ENCODE measurements at regions of chr20 and their contacts with region 1.

Region 1: DNA sequence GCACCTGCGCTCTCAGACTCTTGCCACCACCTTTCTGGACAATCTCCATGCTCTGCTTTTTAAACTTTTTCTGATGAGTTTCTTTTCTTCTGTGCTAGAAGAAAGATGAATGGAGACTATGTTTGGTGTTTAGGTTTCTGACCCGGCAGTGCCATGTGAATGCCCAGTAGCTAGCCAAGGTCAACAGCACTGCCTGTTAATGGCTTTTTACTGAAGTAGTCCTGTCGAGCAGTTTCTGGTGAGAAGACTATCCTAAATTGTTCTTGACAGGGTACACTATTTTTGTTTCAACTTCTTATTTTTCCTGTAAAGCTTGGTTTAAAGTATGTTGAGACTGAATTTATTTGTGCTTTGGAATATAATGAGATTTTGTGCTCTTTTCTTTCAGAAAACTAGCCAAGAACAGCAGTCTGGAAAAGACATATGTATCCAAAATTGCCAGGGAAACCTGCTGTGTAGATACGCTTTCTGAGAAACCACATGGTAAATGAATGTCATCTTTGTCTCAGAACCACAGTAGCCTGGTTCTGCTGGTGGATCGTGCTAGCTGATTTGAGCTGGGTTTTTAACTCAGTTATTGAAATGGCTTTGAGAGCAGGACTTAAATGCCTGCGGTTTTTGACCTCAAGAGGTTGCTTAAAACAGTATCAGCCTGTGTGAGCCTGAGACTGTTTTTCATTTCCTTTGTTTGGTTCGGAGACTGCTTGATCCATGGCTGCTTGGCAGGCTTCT is 48.1 kb downstream of the KCNS1 start:
- DNase-seq: no peak
- ATAC-seq: no peak
- H3K4me3 ChIP-seq: no peak overlapping the region
- H3K27ac ChIP-seq: no peak overlapping the region
- H3K4me1 ChIP-seq: peaks cover 12% of the 10 kb centered on the region
- H3K27me3 ChIP-seq: no peaks in the 10 kb centered on the region
- CTCF ChIP-seq: no peak

Region 2: DNA sequence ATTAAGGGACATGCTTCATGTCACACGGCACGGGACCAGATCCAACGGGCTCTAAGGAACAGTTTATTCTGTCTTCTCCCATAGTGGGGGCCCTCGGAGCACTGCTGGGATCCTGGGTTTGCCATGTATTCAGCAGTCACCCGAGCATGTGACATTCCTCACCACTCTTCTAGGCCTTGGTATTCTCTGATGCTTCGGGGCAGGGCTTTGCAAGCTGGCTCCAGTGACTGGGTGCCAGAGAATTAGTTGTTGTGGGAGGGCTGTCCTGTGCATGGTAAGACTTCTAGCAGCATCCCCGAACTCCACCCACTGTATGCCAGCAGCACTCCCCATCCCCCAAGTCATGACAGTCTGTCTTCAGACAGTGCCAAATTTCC is 332.3 kb before region 1 on chr20:
- CTCF ChIA-PET with region 1: no interaction called
- POLR2A ChIA-PET with region 1: no interaction called
- intact Hi-C with region 1: no loop called
- DNase-seq: peak; percentile 77
- ATAC-seq: peak; percentile 73
- H3K4me3 ChIP-seq: no peak overlapping the region
- H3K27ac ChIP-seq: peak overlapping the region; percentile 48
- H3K4me1 ChIP-seq: peaks cover 19% of the 10 kb centered on the region
- H3K27me3 ChIP-seq: no peaks in the 10 kb centered on the region
- CTCF ChIP-seq: no peak

Region 3: GRCh38 chr20:45036044-45036755 is 16.7 kb before region 1 on chr20:
- CTCF ChIA-PET with region 1: no interaction called
- POLR2A ChIA-PET with region 1: no interaction called
- intact Hi-C with region 1: no loop called
- DNase-seq: peak; percentile 76
- ATAC-seq: peak; percentile 83
- H3K4me3 ChIP-seq: no peak overlapping the region
- H3K27ac ChIP-seq: peak overlapping the region; percentile 45
- H3K4me1 ChIP-seq: peaks cover 29% of the 10 kb centered on the region
- H3K27me3 ChIP-seq: no peaks in the 10 kb centered on the region
- CTCF ChIP-seq: no peak

Region 4: DNA sequence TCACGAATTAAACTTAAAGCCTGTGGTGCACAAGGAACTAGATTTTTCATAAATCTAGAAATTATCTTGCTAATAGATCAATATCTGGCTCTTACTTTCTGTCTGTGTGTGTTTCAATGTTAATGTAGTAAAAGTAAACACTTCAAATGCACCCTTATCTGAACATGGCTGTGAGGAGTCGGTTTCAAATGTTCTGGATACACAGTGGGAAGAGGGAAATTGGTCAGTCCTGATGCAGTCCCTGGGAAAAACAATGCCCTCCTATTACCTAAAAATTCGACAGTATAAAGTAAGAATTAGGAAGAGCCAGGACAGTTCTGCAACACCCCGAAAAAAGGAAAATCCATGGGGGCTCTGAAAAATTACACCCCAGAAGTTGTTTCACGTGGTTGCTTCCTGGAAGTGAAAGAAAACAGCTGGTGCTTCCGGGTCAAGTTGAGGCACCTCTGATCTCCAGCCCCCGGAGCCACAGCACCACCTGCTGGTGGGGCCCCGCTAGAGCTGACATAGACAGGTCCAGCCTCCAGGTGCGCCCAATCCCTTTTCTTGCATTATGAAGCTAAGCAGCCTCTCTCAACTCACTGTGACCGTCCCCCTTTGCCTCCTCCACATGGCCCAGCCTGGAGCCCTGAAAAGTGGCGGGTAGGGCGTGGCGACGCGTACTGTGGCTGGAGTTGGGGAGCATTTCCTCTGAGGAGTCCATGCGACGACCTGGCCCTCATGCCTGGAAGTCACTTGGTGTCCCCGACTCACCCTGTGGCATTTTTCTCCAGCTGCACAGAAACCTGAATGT is 176.6 kb after region 1 on chr20:
- CTCF ChIA-PET with region 1: no interaction called
- POLR2A ChIA-PET with region 1: interaction called, 53 read pairs
- intact Hi-C with region 1: no loop called
- DNase-seq: peak; percentile 91
- ATAC-seq: peak; percentile 83
- H3K4me3 ChIP-seq: peak overlapping the region; percentile 28; the same call in 1 of the 2 replicates
- H3K27ac ChIP-seq: no peak overlapping the region
- H3K4me1 ChIP-seq: 0 out of 2 replicates have a peak, but pooled peaks cover 5% of the 10 kb centered on the region
- H3K27me3 ChIP-seq: no peaks in the 10 kb centered on the region
- CTCF ChIP-seq: peak; percentile 97

Region 5: GRCh38 chr20:45456632-45457031 is 403.8 kb after region 1 on chr20:
- CTCF ChIA-PET with region 1: no interaction called
- POLR2A ChIA-PET with region 1: no interaction called
- intact Hi-C with region 1: no loop called
- DNase-seq: peak; percentile 63
- ATAC-seq: peak; percentile 54; the same call in 1 of the 2 replicates
- H3K4me3 ChIP-seq: no peak overlapping the region
- H3K27ac ChIP-seq: no peak overlapping the region
- H3K4me1 ChIP-seq: no peaks in the 10 kb centered on the region
- H3K27me3 ChIP-seq: no peaks in the 10 kb centered on the region
- CTCF ChIP-seq: peak; percentile 74

Region 6: GRCh38 chr20:45538209-45538799 is 485.4 kb after region 1 on chr20:
- CTCF ChIA-PET with region 1: interaction called, 13 read pairs
- POLR2A ChIA-PET with region 1: no interaction called
- intact Hi-C with region 1: no loop called
- DNase-seq: peak; percentile 93
- ATAC-seq: peak; percentile 63
- H3K4me3 ChIP-seq: no peak overlapping the region
- H3K27ac ChIP-seq: no peak overlapping the region
- H3K4me1 ChIP-seq: peaks cover 10% of the 10 kb centered on the region; the same call in 1 of the 2 replicates
- H3K27me3 ChIP-seq: peaks cover 49% of the 10 kb centered on the region
- CTCF ChIP-seq: peak; percentile 43; the same call in 1 of the 2 replicates

Measured in PC-3 (cell line).